OCI-LY7 (cell line): ENCODE measurements at regions of chr1 and their contacts with region 1.

Region 1: GRCh38 chr1:36420836-36421664 is 23.3 kb upstream of the LSM10 start:
- DNase-seq: peak; percentile 89
- H3K4me3 ChIP-seq: no peak overlapping the region
- H3K27ac ChIP-seq: peak overlapping the region; percentile 22
- H3K4me1 ChIP-seq: peaks cover 11% of the 10 kb centered on the region
- CTCF ChIP-seq: peak; percentile 98

Region 2: GRCh38 chr1:36099681-36100341 is 321.2 kb before region 1 on chr1:
- CTCF ChIA-PET with region 1: no interaction called
- POLR2A ChIA-PET with region 1: no interaction called
- intact Hi-C with region 1: loop called (anchors 5 kb)
- DNase-seq: peak; percentile 77
- H3K4me3 ChIP-seq: no peak overlapping the region
- H3K27ac ChIP-seq: no peak overlapping the region
- H3K4me1 ChIP-seq: no peaks in the 10 kb centered on the region
- CTCF ChIP-seq: peak; percentile 96

Region 3: DNA sequence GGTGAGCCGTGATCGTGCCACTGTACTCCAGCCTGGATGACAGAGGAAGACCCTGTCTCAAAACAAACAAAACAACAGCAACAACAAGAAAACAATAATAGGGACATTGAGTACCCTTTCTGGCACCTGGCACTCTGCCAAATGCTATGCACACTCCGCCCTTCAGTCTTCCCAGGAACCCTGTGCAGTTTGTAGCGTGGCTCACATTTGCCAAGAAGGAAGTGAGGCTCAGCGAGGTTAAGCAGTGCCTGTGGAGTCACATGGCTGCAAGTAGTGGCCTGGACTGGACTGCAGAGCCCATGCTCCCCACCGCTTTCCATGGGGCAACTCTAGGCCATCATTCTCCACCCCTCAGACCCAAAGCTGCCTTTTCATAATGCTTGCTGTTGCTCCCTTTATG is 92.3 kb before region 1 on chr1:
- CTCF ChIA-PET with region 1: no interaction called
- POLR2A ChIA-PET with region 1: no interaction called
- intact Hi-C with region 1: no loop called
- DNase-seq: no peak
- H3K4me3 ChIP-seq: no peak overlapping the region
- H3K27ac ChIP-seq: no peak overlapping the region
- H3K4me1 ChIP-seq: peaks cover 47% of the 10 kb centered on the region
- CTCF ChIP-seq: no peak

Region 4: DNA sequence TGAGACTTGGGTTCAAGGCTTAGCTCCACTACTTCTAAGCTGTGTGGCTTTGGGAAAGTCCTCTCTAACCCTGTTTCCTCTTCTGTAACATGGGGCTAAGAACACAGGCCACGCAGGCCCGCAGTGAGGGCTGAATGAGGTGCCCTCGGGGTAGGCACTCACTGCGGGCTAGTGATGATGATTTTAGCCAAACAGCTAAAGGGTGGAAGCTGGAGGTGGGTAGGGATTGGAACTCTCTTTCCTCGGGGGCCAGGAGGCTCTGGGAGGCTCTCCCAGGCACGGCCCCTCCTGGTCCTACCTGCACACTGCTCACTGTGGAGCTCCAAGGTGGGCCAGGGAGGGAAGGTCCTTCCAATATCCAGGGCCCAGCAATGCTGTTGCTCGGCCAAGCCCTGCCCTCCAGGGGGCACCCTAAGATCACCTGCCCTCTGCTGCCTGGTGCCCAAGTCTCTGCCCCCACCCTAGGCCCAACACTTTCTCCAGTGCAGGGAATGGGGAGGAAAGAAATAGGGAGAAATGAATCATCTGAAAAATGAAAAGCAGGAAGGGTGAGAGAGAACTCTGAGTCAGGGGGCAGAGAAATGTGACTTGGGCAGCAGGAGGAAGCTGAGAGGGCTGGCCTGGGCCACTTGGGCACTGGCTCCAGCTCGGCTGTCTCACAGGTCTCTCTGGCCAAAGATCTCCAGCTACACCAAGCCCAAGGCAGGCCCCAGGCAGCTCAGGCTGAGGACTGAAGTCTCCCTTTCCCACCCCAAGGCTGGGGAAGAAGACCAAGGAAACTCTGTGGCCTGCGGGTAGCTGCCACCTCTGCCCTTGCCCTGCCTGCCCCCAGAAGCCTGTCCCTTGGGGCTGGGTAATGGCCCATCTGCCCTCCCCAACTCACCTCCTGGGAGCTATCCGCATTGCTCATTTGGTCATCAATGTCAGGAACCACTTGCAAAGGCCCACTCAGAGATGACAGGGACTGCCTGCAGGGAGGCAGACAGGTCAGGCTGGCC is 78.3 kb before region 1 on chr1:
- CTCF ChIA-PET with region 1: interaction called, 4 read pairs
- POLR2A ChIA-PET with region 1: no interaction called
- intact Hi-C with region 1: loop called (anchors 1 kb)
- DNase-seq: peak; percentile 55
- H3K4me3 ChIP-seq: no peak overlapping the region
- H3K27ac ChIP-seq: no peak overlapping the region
- H3K4me1 ChIP-seq: peaks cover 9% of the 10 kb centered on the region
- CTCF ChIP-seq: peak; percentile 81

Region 5: DNA sequence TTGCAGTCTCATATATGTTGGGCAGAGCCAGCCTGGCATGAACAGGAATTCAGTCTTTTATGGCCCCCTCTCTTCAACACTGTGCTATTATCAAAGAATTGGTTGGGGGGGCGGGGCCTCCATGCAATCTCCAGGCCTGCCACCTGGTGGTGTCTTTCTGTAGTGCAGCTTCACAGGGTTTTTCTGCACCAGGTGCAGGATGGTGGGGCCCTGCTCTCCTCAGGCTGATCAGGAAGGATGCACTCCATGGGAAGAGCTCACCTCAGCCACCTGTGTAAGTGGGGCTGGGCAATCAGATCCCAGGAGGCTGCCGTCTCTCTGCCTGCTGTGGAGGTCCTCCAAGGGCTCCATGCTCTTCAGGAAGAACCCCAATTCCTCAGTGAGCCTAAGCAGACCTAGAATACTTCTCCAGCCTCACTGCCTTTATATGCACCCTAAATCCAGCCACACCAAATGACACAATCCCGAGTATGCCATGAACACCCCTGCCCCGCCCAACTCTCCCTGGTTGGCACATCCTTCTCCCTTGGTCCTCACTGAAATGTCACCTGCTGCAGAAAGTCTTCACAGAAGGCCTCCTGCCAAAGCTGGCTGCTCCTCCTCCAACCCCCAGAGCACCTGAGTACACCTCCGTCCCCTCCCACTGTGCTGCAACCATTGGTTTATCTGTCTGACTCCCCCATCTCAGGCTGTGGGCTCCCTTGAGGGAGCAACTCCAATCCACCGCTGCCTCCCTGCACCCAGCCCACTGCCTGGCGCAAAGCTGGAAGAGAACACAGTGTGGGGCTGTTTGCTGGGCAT is 51.8 kb before region 1 on chr1:
- CTCF ChIA-PET with region 1: no interaction called
- POLR2A ChIA-PET with region 1: interaction called, 3 read pairs
- intact Hi-C with region 1: loop called (anchors 1 kb)
- DNase-seq: peak; percentile 83
- H3K4me3 ChIP-seq: no peak overlapping the region
- H3K27ac ChIP-seq: peak overlapping the region; percentile 48
- H3K4me1 ChIP-seq: peaks cover 76% of the 10 kb centered on the region
- CTCF ChIP-seq: peak; percentile 96

Region 6: DNA sequence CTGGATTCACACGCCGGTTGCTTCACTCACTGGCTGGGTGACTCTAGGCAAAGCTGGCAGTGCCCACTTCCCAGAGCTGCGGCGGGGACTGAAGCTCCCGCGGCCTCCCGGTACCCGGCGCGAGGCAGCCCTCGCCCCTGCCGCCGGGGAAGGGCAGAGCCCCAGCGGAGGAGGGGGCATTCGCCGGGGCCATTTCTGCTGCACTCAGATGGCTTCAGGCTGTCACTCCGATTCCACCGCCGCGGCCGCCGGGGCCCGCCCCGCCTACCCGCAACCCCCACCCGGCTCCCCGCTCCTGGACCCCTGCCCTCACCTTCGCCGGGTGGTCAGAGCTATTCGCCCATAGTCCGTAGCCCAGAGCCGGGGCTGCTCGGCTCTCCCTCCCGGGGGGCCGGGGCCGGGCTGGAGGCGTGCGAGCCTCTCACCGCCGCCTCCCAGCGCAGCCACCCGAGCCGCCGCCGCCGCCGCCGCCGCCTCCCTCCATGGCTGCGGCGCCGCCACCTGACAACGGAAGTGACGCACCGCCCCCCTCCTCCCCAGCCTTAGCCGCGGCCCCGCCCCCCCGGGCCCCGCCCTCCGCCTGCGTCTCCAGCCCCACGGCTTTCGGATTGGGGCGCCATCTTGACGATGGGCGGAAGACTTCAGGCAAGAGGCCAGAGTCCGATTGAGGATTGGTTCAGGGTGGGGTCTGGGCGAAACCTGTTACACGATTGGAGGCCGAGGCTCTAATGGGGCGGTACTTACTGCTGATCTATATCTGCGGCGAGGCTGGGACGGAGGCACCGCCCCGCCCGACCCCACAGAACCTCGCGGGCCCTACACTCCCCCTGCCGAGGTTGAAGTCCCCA is 35.4 kb before region 1 on chr1 and contains the start of gene STK40:
- CTCF ChIA-PET with region 1: interaction called, 3 read pairs
- POLR2A ChIA-PET with region 1: interaction called, 7 read pairs
- intact Hi-C with region 1: loop called (anchors 2 kb)
- DNase-seq: peak; percentile 100
- H3K4me3 ChIP-seq: peak within 1 kb of the TSS; percentile 96
- H3K27ac ChIP-seq: peak within 1 kb of the TSS; percentile 98
- H3K4me1 ChIP-seq: peaks cover 59% of the 10 kb centered on the region
- CTCF ChIP-seq: no peak
- total RNA-seq, gene STK40: 41.9 and 43.8 TPM in 2 replicates

Region 7: GRCh38 chr1:36492504-36492903 is 71.5 kb after region 1 on chr1:
- CTCF ChIA-PET with region 1: no interaction called
- POLR2A ChIA-PET with region 1: no interaction called
- intact Hi-C with region 1: no loop called
- DNase-seq: no peak
- H3K4me3 ChIP-seq: no peak overlapping the region
- H3K27ac ChIP-seq: no peak overlapping the region
- H3K4me1 ChIP-seq: peaks cover 7% of the 10 kb centered on the region
- CTCF ChIP-seq: no peak